ENCODE measurements at regions of chr14 and their contacts with region 1.

Region 1: GRCh38 chr14:77347751-77348150 is 26.9 kb downstream of the GSTZ1 start:
- DNase-seq: no peak
- ATAC-seq: no peak
- H3K4me3 ChIP-seq: no peak overlapping the region
- H3K27ac ChIP-seq: peak overlapping the region in 1 of 10 donors; percentile 26
- H3K4me1 ChIP-seq: peaks cover 0 to 9% (median 0%) of the 10 kb centered on the region in 9 donors
- H3K27me3 ChIP-seq: no peaks in the 10 kb centered on the region
- CTCF ChIP-seq: no peak

Region 2: GRCh38 chr14:77359626-77360025 is 11.9 kb after region 1 on chr14:
- intact Hi-C with region 1: loop called in 1 of 10 experiments (anchors 2 kb)
- DNase-seq: no peak
- ATAC-seq: no peak
- H3K4me3 ChIP-seq: no peak overlapping the region
- H3K27ac ChIP-seq: no peak overlapping the region
- H3K4me1 ChIP-seq: no peaks in the 10 kb centered on the region
- H3K27me3 ChIP-seq: no peaks in the 10 kb centered on the region
- CTCF ChIP-seq: no peak

Measured in heart right ventricle (tissue), 16 donors.